Colonic mucosa (tissue), 4 donors: ENCODE measurements at regions of chr13 and their contacts with region 1.

Region 1: DNA sequence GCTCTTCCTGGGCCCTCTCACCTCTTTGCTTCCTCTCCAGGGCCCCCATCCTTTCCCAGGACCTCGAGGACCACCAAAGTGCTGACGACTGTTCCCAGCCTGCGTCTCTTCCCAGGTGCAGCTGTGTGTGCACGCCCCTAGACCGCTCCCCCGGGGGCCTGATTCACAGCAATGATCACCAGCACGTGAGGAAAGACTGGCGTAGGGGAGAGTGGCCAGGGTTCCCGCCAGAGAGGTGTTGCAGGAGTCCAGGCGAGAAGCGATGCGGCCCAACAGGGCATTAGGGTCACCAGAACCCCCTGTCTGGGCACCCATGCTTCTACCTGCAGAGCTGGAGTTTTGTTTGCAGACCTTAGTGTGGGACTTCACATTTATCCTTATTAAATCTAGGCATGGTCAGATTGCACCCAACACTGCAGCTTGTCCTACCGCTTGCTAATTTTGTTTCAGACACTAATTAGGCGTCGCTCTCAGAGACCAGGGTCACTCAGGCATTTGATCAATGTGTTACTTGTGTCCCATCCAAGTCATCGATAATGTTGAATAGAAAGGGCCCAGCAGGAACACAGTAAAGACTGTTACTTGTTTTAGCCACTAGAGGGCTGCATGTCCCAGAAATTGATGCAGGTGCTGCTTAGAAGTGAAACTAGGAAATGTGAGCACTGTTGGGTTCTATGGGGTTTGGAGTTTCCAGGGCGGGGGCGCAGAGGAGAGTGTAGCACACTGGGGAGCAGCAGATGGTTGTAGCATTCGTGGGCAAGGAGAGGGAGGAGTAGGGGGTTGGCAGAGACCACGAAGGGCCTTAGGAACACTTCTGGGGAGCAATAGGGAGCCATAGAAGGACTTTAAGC is 53.2 kb downstream of the CDADC1 start:
- DNase-seq: peak; percentile 69
- H3K4me3 ChIP-seq: peak overlapping the region; percentile 24
- H3K27ac ChIP-seq: no peak overlapping the region
- H3K4me1 ChIP-seq: no peaks in the 10 kb centered on the region
- H3K27me3 ChIP-seq: no peaks in the 10 kb centered on the region
- CTCF ChIP-seq: peak; percentile 84

Region 2: DNA sequence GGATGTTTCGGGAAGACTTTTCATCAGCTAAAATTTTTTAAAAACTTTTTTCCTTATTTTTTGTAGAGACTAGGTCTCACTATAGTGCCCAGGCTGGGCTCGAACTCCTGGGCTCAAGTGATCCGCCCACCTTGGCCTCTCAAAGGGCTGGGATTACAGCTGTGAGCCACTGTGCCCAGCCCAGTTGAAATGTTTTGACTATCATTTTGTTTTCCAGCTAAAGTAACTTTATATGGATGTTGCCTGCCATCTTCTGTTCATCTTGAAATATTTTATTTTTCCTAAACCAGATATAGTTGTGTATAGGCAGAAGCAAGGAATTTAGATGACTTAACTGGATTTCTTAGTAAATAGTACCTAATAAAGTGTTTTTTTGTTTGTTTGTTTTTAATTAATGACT is 135.9 kb after region 1 on chr13:
- intact Hi-C with region 1: loop called (anchors 5 kb)
- DNase-seq: no peak
- H3K4me3 ChIP-seq: no peak overlapping the region
- H3K27ac ChIP-seq: no peak overlapping the region
- H3K4me1 ChIP-seq: no peaks in the 10 kb centered on the region
- H3K27me3 ChIP-seq: no peaks in the 10 kb centered on the region
- CTCF ChIP-seq: no peak

Region 3: DNA sequence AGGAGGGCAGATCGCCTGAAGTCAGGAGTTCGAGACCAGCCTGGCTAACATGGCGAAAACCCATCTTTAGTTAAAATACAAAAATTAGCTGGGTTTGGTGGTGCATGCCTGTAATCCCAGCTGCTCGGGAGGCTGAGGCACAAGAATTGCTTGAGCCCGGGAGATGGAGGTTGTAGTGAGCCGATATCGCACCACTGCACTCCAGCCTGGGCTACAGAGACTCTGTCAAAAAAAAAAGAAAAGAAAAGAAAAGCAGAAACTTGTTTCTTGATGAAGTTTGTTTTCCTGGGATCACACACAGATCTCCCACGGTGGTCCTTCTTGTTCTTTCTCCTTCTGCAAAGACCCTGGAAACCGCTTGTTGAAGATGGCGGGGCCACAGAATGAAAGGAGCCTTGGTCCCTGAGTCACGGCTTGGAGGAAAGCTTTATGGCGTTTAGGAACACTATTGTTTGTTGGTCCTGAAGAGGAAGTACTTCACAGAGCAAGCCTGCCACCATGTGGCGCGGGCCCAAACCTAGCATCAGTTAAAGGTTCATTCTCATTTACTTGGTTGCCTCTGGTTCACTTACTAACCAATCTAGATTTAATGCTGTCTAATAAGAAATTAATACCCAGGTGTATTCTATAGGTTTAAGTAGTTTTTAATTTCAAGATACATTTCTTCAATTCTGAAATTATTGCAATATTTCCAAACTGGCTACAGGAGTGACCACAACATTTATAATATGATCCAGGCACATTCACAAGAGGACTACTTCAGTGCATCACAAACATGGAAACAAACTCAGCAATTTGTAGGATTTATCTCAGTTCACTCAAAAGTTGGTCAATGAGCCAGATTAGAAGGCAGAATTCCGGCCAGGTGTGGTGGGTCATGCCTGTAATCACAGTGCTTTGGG is 306.0 kb after region 1 on chr13:
- intact Hi-C with region 1: loop called (anchors 2 kb)
- DNase-seq: peak; percentile 88
- H3K4me3 ChIP-seq: peak overlapping the region; percentile 10
- H3K27ac ChIP-seq: no peak overlapping the region
- H3K4me1 ChIP-seq: no peaks in the 10 kb centered on the region
- H3K27me3 ChIP-seq: no peaks in the 10 kb centered on the region
- CTCF ChIP-seq: peak; percentile 66